ENCODE measurements at regions of chr7 and their contacts with region 1.

Region 1: GRCh38 chr7:27210441-27211083 is 10.7 kb upstream of the HOXA13 start:
- DNase-seq: peak; percentile 82
- H3K4me3 ChIP-seq: peak overlapping the region in 3 of 4 donors; percentile 16 to 45 (median 23)
- H3K27ac ChIP-seq: peak overlapping the region; percentile 75 to 95 (median 79)
- H3K4me1 ChIP-seq: peaks cover 0 to 60% (median 36%) of the 10 kb centered on the region in 4 donors
- H3K27me3 ChIP-seq: peaks cover 94% of the 10 kb centered on the region
- CTCF ChIP-seq: peak; percentile 77 to 97 (median 88)
- EP300 ChIP-seq: no peak
- POLR2A ChIP-seq: peak; percentile 55

Region 2: GRCh38 chr7:27576360-27576944 is 365.9 kb after region 1 on chr7:
- in situ Hi-C with region 1: loop called in 3 of 4 experiments (anchors 10 to 25 kb)
- intact Hi-C with region 1: loop called (anchors 10 kb)
- DNase-seq: no peak
- H3K4me3 ChIP-seq: no peak overlapping the region
- H3K27ac ChIP-seq: no peak overlapping the region
- H3K4me1 ChIP-seq: peaks cover 0 to 4% (median 0%) of the 10 kb centered on the region in 4 donors
- H3K27me3 ChIP-seq: no peaks in the 10 kb centered on the region
- CTCF ChIP-seq: peak; percentile 59 to 70 (median 68)
- EP300 ChIP-seq: no peak
- POLR2A ChIP-seq: no peak

Region 3: DNA sequence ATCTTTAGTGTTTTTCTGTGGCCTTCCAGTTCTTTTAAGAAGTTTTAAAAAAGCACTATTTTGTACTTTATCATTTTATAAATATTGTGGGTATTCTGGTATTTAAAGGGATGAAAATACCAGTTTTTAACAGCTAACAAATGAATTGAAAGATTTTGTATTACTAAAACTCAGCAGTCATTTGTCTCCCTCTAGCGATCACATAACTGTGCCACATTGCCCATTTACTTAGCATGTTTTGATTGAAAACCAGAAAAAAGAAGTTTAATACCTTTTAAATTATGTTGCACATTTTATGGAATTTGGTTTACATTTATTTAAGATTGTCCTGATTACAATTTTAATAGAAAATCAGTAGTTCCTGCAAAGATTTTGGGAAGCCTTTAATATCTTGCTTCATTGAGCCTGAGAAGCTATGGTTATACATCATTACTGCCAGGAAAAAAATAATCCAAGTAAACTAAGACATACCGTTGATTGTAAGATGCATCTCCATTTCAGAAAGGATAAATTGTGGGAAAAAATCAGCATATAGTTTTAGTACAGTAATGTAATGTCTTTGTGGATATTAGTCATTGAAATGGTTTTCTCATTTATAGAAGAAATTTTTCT is 564.3 kb after region 1 on chr7:
- in situ Hi-C with region 1: loop called in 2 of 4 experiments (anchors 25 kb)
- intact Hi-C with region 1: no loop called
- DNase-seq: no peak
- H3K4me3 ChIP-seq: no peak overlapping the region
- H3K27ac ChIP-seq: no peak overlapping the region
- H3K4me1 ChIP-seq: no peaks in the 10 kb centered on the region
- H3K27me3 ChIP-seq: no peaks in the 10 kb centered on the region
- CTCF ChIP-seq: peak; percentile 46 to 51 (median 49)
- EP300 ChIP-seq: no peak
- POLR2A ChIP-seq: no peak

Region 4: DNA sequence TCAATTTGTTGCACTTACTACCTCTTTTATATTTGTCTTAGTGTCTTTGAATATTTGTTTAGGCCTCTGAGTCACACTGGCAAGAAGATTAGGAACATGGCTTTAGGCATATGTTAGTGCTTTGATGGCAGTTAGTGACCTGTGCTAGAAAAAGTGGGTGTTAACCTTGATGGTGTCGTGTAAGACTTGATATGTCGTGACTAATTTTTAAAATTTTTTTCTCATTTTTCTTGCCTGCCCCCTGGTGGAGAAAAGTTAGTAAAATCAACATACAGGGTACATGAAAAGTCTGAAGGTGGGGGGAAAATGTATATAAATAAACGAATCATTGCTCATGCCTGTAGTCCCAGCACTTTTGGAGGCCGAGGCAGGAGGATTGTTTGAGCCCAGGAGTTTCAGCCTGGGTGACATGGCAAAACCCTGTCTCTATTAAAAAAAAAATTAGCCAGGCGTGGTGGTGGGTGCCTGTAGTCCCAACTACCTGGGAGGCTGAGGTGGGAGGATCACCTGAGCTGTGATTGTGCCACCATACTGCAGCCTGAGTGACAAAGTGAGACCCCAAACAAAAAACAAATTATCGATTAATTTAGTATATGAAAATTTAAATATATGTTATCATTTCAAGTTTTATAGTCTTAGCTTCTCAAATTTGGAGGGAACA is 574.0 kb after region 1 on chr7:
- in situ Hi-C with region 1: loop called in 1 of 4 experiments (anchors 25 kb)
- intact Hi-C with region 1: no loop called
- DNase-seq: no peak
- H3K4me3 ChIP-seq: no peak overlapping the region
- H3K27ac ChIP-seq: no peak overlapping the region
- H3K4me1 ChIP-seq: peaks cover 0 to 11% (median 7%) of the 10 kb centered on the region in 4 donors
- H3K27me3 ChIP-seq: no peaks in the 10 kb centered on the region
- CTCF ChIP-seq: peak; percentile 48 to 58 (median 57)
- EP300 ChIP-seq: no peak
- POLR2A ChIP-seq: no peak

Region 5: DNA sequence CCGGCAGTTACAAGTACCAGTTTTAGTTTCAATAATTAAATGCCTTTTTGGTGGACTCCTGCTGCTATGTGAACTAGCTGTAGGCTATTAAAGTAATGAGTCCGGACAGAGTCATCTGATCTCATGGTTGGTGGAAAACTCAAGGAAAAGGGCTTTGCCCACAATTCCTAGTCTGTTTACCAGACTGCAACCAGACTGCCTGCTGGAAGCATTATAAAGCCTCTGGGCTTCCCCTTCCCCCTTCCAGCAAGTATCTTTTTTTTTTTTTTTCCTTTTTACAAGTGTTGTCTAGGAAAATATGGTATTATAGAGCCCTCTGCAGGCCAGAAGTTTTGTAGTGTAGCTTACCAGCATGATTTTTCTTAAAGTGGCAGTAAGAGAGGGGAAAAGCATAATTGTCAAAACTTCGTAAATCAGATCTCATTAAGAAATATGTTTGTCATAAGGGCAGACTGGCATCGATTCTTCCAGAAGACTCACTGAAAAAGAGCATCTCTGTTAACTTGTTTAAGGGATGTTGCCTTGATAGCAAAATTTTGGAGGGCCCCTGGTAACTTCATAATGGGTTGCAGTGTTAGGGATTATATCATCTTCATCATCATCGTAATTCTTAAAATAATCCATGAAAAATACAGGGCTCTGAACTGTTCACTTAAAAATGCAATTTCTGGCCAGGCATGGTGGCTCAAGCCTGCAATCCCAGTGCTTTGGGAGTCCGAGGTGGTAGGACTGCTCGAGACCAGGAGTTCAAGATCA is 710.7 kb after region 1 on chr7:
- in situ Hi-C with region 1: loop called (anchors 10 to 25 kb)
- intact Hi-C with region 1: no loop called
- DNase-seq: peak; percentile 22
- H3K4me3 ChIP-seq: peak overlapping the region in 1 of 4 donors; percentile 19
- H3K27ac ChIP-seq: no peak overlapping the region
- H3K4me1 ChIP-seq: peaks cover 0 to 17% (median 7%) of the 10 kb centered on the region in 4 donors
- H3K27me3 ChIP-seq: no peaks in the 10 kb centered on the region
- CTCF ChIP-seq: peak; percentile 46 to 67 (median 50)
- EP300 ChIP-seq: no peak
- POLR2A ChIP-seq: no peak

Region 6: DNA sequence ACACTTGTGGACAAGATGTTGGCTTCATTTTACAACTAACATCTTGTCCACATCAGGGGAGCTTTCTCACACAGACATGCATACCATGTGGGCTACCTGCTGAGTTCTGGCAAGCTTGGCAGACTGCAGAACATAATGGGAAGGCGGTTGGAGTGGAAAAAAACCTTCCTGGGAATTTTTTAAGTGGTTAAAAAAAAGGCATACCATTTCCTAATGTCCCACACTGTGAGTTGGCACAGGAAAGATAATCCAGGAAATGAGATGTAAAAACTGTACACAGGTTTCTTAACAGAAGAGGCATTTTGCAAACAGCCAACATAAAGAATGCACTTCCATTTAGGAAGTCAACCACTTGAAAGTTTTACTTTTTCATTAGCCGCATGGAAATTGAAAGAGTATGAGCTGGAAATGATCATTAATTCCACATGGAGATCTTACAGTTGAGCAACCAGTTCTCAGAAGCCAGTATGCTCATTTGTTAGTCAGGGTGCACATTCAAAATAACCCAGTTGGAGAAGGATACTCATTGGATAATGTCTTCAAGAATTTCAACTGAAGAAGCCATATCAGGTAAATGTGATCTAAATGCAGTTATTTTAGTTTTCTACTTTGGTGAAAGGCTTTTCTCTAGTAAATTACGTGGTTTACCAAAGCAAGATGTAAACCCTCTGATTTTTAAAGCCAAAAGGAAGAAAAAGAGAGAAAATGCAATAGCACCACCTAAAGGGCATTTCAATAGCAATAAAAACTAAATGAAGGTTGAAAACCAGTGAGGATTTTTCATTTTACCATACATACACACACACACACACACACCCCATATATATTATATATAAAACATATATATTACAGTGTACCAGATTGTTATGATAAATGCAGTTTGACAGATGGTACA is 723.4 kb after region 1 on chr7:
- in situ Hi-C with region 1: loop called (anchors 10 to 25 kb)
- intact Hi-C with region 1: no loop called
- DNase-seq: no peak
- H3K4me3 ChIP-seq: no peak overlapping the region
- H3K27ac ChIP-seq: no peak overlapping the region
- H3K4me1 ChIP-seq: peaks cover 0 to 14% (median 10%) of the 10 kb centered on the region in 4 donors
- H3K27me3 ChIP-seq: no peaks in the 10 kb centered on the region
- CTCF ChIP-seq: peak in 1 of 5 experiments; percentile 6
- EP300 ChIP-seq: no peak
- POLR2A ChIP-seq: no peak

Region 7: DNA sequence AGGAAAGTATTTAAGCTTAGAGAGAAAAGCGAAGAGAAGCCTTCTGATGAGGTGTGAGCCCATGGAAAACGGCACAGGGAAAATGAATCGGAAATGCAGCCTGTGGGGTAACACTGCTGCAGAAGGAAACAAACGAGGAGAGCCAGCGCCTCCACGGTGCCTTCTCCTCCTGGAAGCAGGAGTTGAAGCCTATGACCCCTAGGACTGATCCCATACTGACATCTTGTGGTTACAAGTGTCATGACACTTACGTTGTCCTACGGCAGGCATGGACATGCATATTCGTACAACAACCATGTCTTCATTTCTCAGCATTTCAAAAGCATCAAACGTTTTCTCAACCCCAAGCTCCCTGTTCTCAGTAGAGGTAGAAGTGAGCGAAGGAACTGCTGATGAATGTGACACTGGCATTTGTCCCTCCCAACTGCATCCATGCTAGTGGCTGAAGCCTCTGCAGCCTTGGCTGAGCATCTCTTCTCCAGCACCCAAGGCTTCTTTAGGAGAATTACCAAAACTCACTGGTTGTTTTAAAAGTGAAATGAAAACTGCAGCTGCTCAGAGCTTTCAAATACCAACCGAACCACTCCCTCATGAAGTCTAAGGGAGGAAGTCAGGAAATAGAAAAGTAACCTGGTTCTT is 809.9 kb after region 1 on chr7:
- in situ Hi-C with region 1: loop called in 1 of 4 experiments (anchors 25 kb)
- intact Hi-C with region 1: no loop called
- DNase-seq: peak; percentile 58
- H3K4me3 ChIP-seq: no peak overlapping the region
- H3K27ac ChIP-seq: peak overlapping the region in 1 of 4 donors; percentile 4
- H3K4me1 ChIP-seq: peaks cover 0 to 9% (median 8%) of the 10 kb centered on the region in 4 donors
- H3K27me3 ChIP-seq: no peaks in the 10 kb centered on the region
- CTCF ChIP-seq: peak; percentile 79 to 91 (median 84)
- EP300 ChIP-seq: no peak
- POLR2A ChIP-seq: no peak

Measured in transverse colon (tissue), 4 donors.